Transverse colon (tissue), 4 donors: ENCODE measurements at regions of chr1 and their contacts with region 1.

Region 1: GRCh38 chr1:17119773-17120480 is 676 bp upstream of the PADI2 start:
- DNase-seq: no peak
- H3K4me3 ChIP-seq: peak overlapping the region in 3 of 4 donors; percentile 49 to 69 (median 50)
- H3K27ac ChIP-seq: no peak overlapping the region
- H3K4me1 ChIP-seq: peaks cover 0 to 66% (median 29%) of the 10 kb centered on the region in 4 donors
- H3K27me3 ChIP-seq: peaks cover 30% of the 10 kb centered on the region
- CTCF ChIP-seq: no peak
- EP300 ChIP-seq: no peak
- POLR2A ChIP-seq: no peak

Region 2: DNA sequence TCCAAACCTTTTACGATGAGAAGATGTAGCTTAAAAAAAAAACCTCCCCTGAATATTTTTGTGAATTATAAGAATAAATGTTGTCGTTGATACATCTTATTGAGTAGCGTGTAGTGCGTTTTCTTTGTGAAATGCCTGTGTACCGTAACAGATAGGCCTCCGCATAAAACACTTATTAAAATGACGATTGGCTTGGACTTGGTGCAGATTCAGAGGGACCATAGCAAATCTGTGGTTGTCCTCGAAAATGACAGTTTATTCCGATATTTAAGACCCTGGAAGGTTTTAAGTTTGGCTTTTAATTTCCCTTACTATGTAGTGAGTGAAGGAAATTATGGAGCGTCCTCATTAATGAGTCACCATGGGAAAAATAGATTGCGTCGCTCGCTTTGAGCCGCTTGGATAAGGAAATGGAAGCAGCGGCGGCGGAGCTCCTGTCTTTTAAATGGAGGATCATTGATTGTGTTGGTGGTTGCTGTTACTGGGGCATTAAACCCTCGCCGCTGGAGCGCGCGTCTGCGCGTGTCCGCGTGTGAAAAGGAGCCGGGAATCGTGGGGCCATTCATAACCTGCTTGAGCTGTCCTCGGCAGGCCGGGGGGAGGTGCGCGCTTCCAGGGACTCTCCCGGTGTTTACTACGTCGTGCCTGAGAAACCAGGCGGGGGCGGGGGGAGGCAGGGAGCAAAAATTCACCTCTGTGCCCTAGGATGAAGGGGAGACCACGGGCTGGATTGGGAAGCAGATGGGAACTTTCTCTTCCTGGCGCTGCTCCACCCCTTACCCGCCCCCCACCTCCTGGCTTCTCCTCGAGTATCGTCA is 1270.8 kb before region 1 on chr1:
- in situ Hi-C with region 1: no loop called
- intact Hi-C with region 1: no loop called
- DNase-seq: peak; percentile 88
- H3K4me3 ChIP-seq: peak overlapping the region; percentile 50 to 98 (median 75)
- H3K27ac ChIP-seq: peak overlapping the region; percentile 94 to 99 (median 98)
- H3K4me1 ChIP-seq: peaks cover 8 to 67% (median 36%) of the 10 kb centered on the region in 4 donors
- H3K27me3 ChIP-seq: no peaks in the 10 kb centered on the region
- CTCF ChIP-seq: peak in 2 of 5 experiments; percentile 26 to 27
- EP300 ChIP-seq: no peak
- POLR2A ChIP-seq: peak; percentile 83

Region 3: GRCh38 chr1:17236779-17237560 is 117.0 kb after region 1 on chr1:
- in situ Hi-C with region 1: loop called (anchors 5 to 10 kb)
- intact Hi-C with region 1: no loop called
- DNase-seq: peak; percentile 92
- H3K4me3 ChIP-seq: no peak overlapping the region
- H3K27ac ChIP-seq: no peak overlapping the region
- H3K4me1 ChIP-seq: peaks cover 13 to 27% (median 20%) of the 10 kb centered on the region in 4 donors
- H3K27me3 ChIP-seq: no peaks in the 10 kb centered on the region
- CTCF ChIP-seq: peak; percentile 87 to 94 (median 92)
- EP300 ChIP-seq: no peak
- POLR2A ChIP-seq: no peak

Region 4: GRCh38 chr1:17307946-17308345 is 188.0 kb after region 1 on chr1 and contains the start of gene PADI4:
- in situ Hi-C with region 1: no loop called
- intact Hi-C with region 1: no loop called
- DNase-seq: no peak
- H3K4me3 ChIP-seq: no peak within 1 kb of the TSS
- H3K27ac ChIP-seq: no peak within 1 kb of the TSS
- H3K4me1 ChIP-seq: no peaks in the 10 kb centered on the region
- H3K27me3 ChIP-seq: peaks cover 46% of the 10 kb centered on the region
- CTCF ChIP-seq: no peak
- EP300 ChIP-seq: no peak
- POLR2A ChIP-seq: no peak
- total RNA-seq, gene PADI4: not detected

Region 5: DNA sequence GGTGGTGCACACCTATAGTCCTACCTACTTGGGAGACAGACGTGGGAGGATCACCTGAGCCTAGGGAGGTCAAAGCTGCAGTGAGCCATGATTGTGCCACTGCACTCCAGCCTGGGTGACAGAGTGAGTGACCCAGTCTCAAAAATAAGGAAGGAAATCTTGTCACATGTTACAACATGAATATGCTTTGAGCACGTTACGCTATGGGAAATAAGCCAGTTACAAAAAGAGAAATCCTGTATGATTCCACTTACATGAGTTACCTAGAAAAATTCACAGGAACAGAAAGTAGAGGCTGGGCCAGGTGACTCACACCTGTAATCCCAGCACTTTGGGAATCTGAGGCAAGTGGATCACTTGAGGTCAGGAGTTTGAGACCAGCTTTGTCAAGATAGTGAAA is 245.4 kb after region 1 on chr1:
- in situ Hi-C with region 1: no loop called
- intact Hi-C with region 1: no loop called
- DNase-seq: no peak
- H3K4me3 ChIP-seq: no peak overlapping the region
- H3K27ac ChIP-seq: no peak overlapping the region
- H3K4me1 ChIP-seq: no peaks in the 10 kb centered on the region
- H3K27me3 ChIP-seq: peaks cover 19% of the 10 kb centered on the region
- CTCF ChIP-seq: no peak
- EP300 ChIP-seq: no peak
- POLR2A ChIP-seq: no peak